ENCODE measurements at regions of chr17 and their contacts with region 1.

Region 1: GRCh38 chr17:35119368-35120165 is at the start of gene RAD51D:
- DNase-seq: peak; percentile 71 to 84 (median 79)
- H3K4me3 ChIP-seq: peak within 1 kb of the TSS; percentile 83
- H3K4me3 Mint-ChIP-seq: peak within 1 kb of the TSS; percentile 91 to 96 (median 95)
- H3K27ac ChIP-seq: peak within 1 kb of the TSS; percentile 80
- H3K27ac Mint-ChIP-seq: peak within 1 kb of the TSS; percentile 51 to 99 (median 94)
- H3K4me1 ChIP-seq: peaks cover 22% of the 10 kb centered on the region
- H3K4me1 Mint-ChIP-seq: peaks cover 29 to 43% (median 41%) of the 10 kb centered on the region in 3 donors
- H3K27me3 ChIP-seq: no peaks in the 10 kb centered on the region
- H3K27me3 Mint-ChIP-seq: peaks cover 0 to 2% of the 10 kb centered on the region in 2 donors
- total RNA-seq, gene RAD51D: 27.5 to 29.8 TPM

Region 2: DNA sequence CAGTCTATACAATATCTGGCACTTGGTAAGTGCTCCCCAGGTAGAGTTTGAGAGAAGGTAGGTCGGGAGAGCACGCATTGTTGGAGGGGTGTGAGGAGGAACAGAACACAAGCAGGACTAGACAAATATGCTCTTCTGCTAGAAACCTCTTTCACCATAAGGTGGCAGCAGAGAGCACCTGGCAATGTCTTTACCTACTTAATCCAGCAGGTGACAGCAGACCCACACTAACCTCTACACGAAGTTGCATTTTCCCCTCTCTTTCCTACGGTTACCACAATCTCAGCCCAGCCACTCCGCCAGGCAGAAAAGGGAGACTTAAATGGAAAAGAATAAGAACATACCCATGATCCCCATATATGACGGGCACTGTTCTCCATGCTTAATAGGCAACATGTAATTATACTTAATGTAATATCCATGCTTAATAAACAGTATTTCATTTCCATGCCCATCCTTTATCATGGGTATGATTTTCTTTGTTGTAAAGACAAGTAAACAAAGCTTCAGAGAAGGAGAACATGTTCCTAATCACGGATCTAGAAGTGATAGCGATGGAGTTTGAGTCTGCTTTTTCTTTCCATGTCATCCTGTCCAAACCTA is 919.5 kb before region 1 on chr17:
- CTCF ChIA-PET with region 1: interaction called, 10 read pairs
- POLR2A ChIA-PET with region 1: no interaction called
- DNase-seq: peak; percentile 46 to 65 (median 50)
- H3K4me3 ChIP-seq: no peak overlapping the region
- H3K4me3 Mint-ChIP-seq: no peak overlapping the region
- H3K27ac ChIP-seq: no peak overlapping the region
- H3K27ac Mint-ChIP-seq: no peak overlapping the region
- H3K4me1 ChIP-seq: no peaks in the 10 kb centered on the region
- H3K4me1 Mint-ChIP-seq: peaks cover 0 to 6% (median 4%) of the 10 kb centered on the region in 3 donors
- H3K27me3 ChIP-seq: no peaks in the 10 kb centered on the region
- H3K27me3 Mint-ChIP-seq: peaks cover 6 to 43% of the 10 kb centered on the region in 2 donors

Region 3: GRCh38 chr17:34980681-34981537 is 138.7 kb before region 1 on chr17:
- CTCF ChIA-PET with region 1: interaction called, 17 read pairs
- POLR2A ChIA-PET with region 1: no interaction called
- DNase-seq: peak; percentile 69 to 82 (median 75)
- H3K4me3 ChIP-seq: peak overlapping the region; percentile 76
- H3K4me3 Mint-ChIP-seq: peak overlapping the region; percentile 94 to 99 (median 96)
- H3K27ac ChIP-seq: peak overlapping the region; percentile 94
- H3K27ac Mint-ChIP-seq: peak overlapping the region; percentile 92 to 99 (median 98)
- H3K4me1 ChIP-seq: peaks cover 48% of the 10 kb centered on the region
- H3K4me1 Mint-ChIP-seq: peaks cover 44 to 61% (median 52%) of the 10 kb centered on the region in 3 donors
- H3K27me3 ChIP-seq: no peaks in the 10 kb centered on the region
- H3K27me3 Mint-ChIP-seq: no peaks in the 10 kb centered on the region

Region 4: DNA sequence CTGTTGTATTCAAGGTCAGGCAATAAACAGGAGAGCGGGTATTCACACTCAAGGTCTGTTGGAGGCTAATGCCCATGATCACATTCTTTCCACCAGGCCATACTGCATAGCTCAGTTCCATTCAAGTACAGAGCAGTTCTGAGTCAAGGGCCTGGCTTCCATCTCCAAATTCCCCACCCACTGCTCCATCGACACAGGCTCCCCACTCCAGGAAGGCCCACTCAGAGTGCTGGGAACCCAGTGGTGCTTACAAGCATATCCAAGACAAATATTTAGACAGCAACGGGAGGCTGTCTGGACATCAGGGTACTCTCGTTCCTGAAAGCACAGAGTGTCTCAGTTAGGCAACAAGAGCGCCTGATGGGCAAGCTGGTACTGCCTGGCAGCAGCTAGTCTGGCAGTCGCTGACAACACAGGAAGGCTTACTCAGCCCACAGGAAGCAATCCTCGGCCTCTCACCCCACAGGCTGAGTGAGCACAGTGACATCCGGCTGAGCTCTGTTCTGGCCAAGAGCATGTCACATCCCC is 97.0 kb before region 1 on chr17:
- CTCF ChIA-PET with region 1: interaction called, 11 read pairs
- POLR2A ChIA-PET with region 1: no interaction called
- DNase-seq: peak; percentile 60 to 80 (median 62)
- H3K4me3 ChIP-seq: peak overlapping the region; percentile 36
- H3K4me3 Mint-ChIP-seq: peak overlapping the region in 6 of 7 donors; percentile 29 to 87 (median 74)
- H3K27ac ChIP-seq: peak overlapping the region; percentile 62
- H3K27ac Mint-ChIP-seq: peak overlapping the region; percentile 95 to 99 (median 98)
- H3K4me1 ChIP-seq: peaks cover 35% of the 10 kb centered on the region
- H3K4me1 Mint-ChIP-seq: peaks cover 46 to 74% (median 71%) of the 10 kb centered on the region in 3 donors
- H3K27me3 ChIP-seq: no peaks in the 10 kb centered on the region
- H3K27me3 Mint-ChIP-seq: no peaks in the 10 kb centered on the region

Region 5: DNA sequence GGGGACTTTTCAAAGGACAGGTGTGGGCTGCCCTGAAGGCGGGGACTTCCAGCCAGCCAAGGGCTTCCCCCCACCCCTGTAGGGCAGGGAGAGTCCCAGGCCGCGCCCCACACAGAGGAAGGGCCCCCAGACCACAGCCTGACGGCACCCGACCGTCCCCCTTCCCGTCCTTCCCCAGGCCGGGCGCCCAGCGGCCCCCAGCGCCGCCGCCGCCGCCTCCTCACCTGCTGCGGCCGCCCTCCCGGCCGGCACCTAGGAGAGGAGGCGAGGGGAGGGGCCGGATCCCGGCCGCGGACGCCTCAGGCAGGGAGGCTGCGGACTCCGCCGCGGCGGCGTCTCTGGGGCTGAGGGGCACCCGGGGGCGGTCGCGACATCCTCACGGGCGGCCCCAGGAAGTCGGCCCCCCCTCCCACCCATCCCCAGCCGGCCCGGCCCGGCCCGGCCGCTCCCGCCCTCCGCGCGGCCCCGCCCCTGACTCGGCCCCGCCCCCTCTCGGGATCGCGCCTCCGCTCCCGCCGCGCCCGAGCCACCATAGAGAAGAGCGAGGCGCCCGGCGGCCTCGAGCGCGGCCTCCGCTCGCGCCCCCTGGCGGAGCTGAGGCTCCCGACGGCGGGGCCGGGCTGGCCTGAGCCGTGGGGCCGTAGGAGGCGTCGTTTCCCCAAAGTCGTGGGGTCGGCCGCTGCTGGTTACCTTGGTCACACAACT is 30.5 kb before region 1 on chr17:
- CTCF ChIA-PET with region 1: interaction called, 24 read pairs
- POLR2A ChIA-PET with region 1: interaction called, 5 read pairs
- DNase-seq: peak; percentile 86 to 92 (median 88)
- H3K4me3 ChIP-seq: peak overlapping the region; percentile 96
- H3K4me3 Mint-ChIP-seq: peak overlapping the region; percentile 95 to 98 (median 97)
- H3K27ac ChIP-seq: peak overlapping the region; percentile 90
- H3K27ac Mint-ChIP-seq: peak overlapping the region; percentile 94 to 99 (median 98)
- H3K4me1 ChIP-seq: peaks cover 29% of the 10 kb centered on the region
- H3K4me1 Mint-ChIP-seq: peaks cover 43 to 52% (median 47%) of the 10 kb centered on the region in 3 donors
- H3K27me3 ChIP-seq: no peaks in the 10 kb centered on the region
- H3K27me3 Mint-ChIP-seq: no peaks in the 10 kb centered on the region

Region 6: DNA sequence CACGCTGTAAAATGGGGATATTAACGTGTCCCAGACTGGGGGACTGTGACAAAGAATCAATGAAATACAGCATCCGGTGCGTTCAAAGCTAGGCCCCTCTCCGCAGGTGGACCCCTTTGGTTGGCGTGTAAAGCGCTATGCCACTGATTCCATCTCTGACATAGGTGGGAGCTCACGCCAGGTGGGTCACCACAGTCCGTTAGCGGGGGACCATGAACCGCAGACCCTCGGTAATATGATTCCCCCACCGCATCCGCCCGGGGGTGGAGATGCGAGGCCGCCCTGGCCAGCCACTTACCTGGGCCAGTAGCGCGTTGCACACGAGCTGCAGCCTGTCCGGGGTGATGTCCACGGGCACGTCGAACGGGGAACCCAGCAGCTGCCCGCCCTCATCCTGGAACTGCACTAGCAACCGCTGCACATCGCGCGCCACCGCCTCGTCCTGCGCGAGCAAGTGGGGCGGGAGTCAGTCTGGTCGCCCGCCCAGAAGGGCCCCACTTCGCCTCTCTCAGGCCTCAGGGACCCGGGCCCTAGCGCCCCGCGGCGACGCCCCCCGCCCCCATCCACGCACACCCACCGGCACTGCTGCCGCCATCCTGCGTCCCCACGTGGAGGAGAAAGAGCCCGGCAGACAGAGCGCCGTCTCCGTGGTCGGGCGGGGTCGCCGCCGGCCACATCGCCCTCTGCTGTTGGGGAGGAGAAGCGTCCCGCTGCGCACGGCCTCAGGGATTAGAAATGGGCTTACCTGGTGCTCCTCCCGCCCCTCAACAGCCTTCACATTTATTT is 22.3 kb after region 1 on chr17 and contains the start of gene NLE1:
- CTCF ChIA-PET with region 1: interaction called, 10 read pairs
- POLR2A ChIA-PET with region 1: no interaction called
- DNase-seq: peak; percentile 78 to 89 (median 84)
- H3K4me3 ChIP-seq: peak within 1 kb of the TSS; percentile 85
- H3K4me3 Mint-ChIP-seq: peak within 1 kb of the TSS; percentile 84 to 93 (median 86)
- H3K27ac ChIP-seq: peak within 1 kb of the TSS; percentile 55
- H3K27ac Mint-ChIP-seq: peak within 1 kb of the TSS; percentile 24 to 88 (median 78)
- H3K4me1 ChIP-seq: peaks cover 14% of the 10 kb centered on the region
- H3K4me1 Mint-ChIP-seq: peaks cover 8 to 23% (median 20%) of the 10 kb centered on the region in 3 donors
- H3K27me3 ChIP-seq: no peaks in the 10 kb centered on the region
- H3K27me3 Mint-ChIP-seq: no peaks in the 10 kb centered on the region
- total RNA-seq, gene NLE1: 54.0 to 58.3 TPM

Region 7: GRCh38 chr17:35170968-35171771 is 51.6 kb after region 1 on chr17:
- CTCF ChIA-PET with region 1: no interaction called
- POLR2A ChIA-PET with region 1: no interaction called
- DNase-seq: peak in 3 of 5 donors; percentile 63 to 70 (median 65)
- H3K4me3 ChIP-seq: no peak overlapping the region
- H3K4me3 Mint-ChIP-seq: peak overlapping the region; percentile 22 to 77 (median 74)
- H3K27ac ChIP-seq: no peak overlapping the region
- H3K27ac Mint-ChIP-seq: peak overlapping the region; percentile 63 to 96 (median 88)
- H3K4me1 ChIP-seq: peaks cover 39% of the 10 kb centered on the region
- H3K4me1 Mint-ChIP-seq: peaks cover 41 to 51% (median 47%) of the 10 kb centered on the region in 3 donors
- H3K27me3 ChIP-seq: no peaks in the 10 kb centered on the region
- H3K27me3 Mint-ChIP-seq: no peaks in the 10 kb centered on the region

Region 8: GRCh38 chr17:35183332-35183731 is 63.8 kb after region 1 on chr17:
- CTCF ChIA-PET with region 1: no interaction called
- POLR2A ChIA-PET with region 1: no interaction called
- DNase-seq: no peak
- H3K4me3 ChIP-seq: no peak overlapping the region
- H3K4me3 Mint-ChIP-seq: no peak overlapping the region
- H3K27ac ChIP-seq: no peak overlapping the region
- H3K27ac Mint-ChIP-seq: peak overlapping the region in 2 of 8 donors; percentile 19 to 44
- H3K4me1 ChIP-seq: peaks cover 29% of the 10 kb centered on the region
- H3K4me1 Mint-ChIP-seq: peaks cover 45 to 89% (median 59%) of the 10 kb centered on the region in 3 donors
- H3K27me3 ChIP-seq: no peaks in the 10 kb centered on the region
- H3K27me3 Mint-ChIP-seq: no peaks in the 10 kb centered on the region

Measured in CD8-positive, alpha-beta memory T cell (primary cell).